ENCODE measurements at regions of chr11 and their contacts with region 1.

Region 1: GRCh38 chr11:130715085-130715876 is 201.0 kb downstream of the SNX19 start:
- DNase-seq: no peak
- ATAC-seq: no peak
- H3K4me3 ChIP-seq: no peak overlapping the region
- H3K27ac ChIP-seq: no peak overlapping the region
- H3K4me1 ChIP-seq: no peaks in the 10 kb centered on the region
- H3K27me3 ChIP-seq: no peaks in the 10 kb centered on the region
- CTCF ChIP-seq: no peak
- EP300 ChIP-seq: no peak
- POLR2A ChIP-seq: no peak
- RAD21 ChIP-seq: no peak

Region 2: GRCh38 chr11:130775306-130776058 is 60.2 kb after region 1 on chr11:
- CTCF ChIA-PET with region 1: no interaction called
- POLR2A ChIA-PET with region 1: no interaction called
- in situ Hi-C with region 1: no loop called
- intact Hi-C with region 1: loop called (anchors 2 kb)
- DNase-seq: no peak
- ATAC-seq: no peak
- H3K4me3 ChIP-seq: no peak overlapping the region
- H3K27ac ChIP-seq: no peak overlapping the region
- H3K4me1 ChIP-seq: no peaks in the 10 kb centered on the region
- H3K27me3 ChIP-seq: no peaks in the 10 kb centered on the region
- CTCF ChIP-seq: no peak
- EP300 ChIP-seq: no peak
- POLR2A ChIP-seq: no peak
- RAD21 ChIP-seq: no peak